Gastrocnemius medialis (tissue), 4 donors: ENCODE measurements at regions of chr1 and their contacts with region 1.

Region 1: GRCh38 chr1:201224666-201225370 is 34.2 kb downstream of the IGFN1 start:
- DNase-seq: no peak
- ATAC-seq: no peak
- H3K4me3 ChIP-seq: no peak overlapping the region
- H3K27ac ChIP-seq: no peak overlapping the region
- H3K4me1 ChIP-seq: peaks cover 0 to 6% of the 10 kb centered on the region in 2 donors
- H3K27me3 ChIP-seq: no peaks in the 10 kb centered on the region
- CTCF ChIP-seq: no peak
- POLR2A ChIP-seq: no peak

Region 2: DNA sequence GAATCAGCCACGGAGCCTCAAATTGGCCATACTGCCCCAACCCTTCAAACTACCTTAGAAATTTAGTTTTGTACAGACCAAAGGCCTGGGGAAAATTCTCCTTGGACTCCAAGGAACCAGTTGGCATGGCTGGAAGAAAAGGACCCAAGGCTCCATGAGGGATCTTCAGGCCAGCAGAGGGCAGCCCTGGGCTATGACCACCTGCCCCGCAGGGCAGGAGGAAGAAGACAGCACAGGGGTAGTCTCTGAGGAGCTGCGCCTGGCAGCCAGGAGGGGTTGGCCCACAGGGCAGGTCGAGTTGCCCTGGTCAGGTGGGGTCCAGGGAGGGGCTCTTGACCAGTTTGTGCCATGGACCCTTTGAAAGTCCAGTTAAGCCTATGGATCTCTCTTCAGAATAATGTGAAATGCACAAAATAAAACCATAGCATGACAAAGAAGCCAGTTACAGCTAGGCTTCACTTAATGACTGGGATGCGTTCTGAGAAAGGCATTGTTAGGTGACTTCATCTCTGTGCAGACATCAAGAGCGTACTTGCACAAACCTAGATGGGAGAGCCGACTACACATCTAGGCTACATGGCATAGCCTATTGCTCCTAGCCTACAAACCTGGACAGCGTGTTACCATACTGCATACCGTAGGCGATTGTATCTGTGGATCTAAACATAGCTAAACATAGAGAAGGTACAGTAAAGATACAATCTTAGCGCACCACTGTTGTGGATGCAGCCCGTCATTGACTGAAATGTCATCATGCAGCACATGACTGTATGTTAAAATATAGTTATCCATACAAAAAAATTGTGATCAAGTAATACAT is 138.7 kb before region 1 on chr1:
- in situ Hi-C with region 1: no loop called
- intact Hi-C with region 1: loop called (anchors 5 kb)
- DNase-seq: peak in 1 of 2 donors; percentile 82
- ATAC-seq: peak; percentile 62 to 87
- H3K4me3 ChIP-seq: no peak overlapping the region
- H3K27ac ChIP-seq: peak overlapping the region; percentile 14 to 98 (median 96)
- H3K4me1 ChIP-seq: peaks cover 15 to 20% of the 10 kb centered on the region in 2 donors
- H3K27me3 ChIP-seq: no peaks in the 10 kb centered on the region
- CTCF ChIP-seq: peak; percentile 82 to 87 (median 85)
- POLR2A ChIP-seq: no peak

Region 3: GRCh38 chr1:201114236-201115131 is 110.3 kb before region 1 on chr1:
- in situ Hi-C with region 1: no loop called
- intact Hi-C with region 1: loop called (anchors 1 kb)
- DNase-seq: peak; percentile 85 to 94
- ATAC-seq: peak; percentile 85 to 92
- H3K4me3 ChIP-seq: peak overlapping the region; percentile 59 to 84 (median 67)
- H3K27ac ChIP-seq: peak overlapping the region; percentile 89 to 98 (median 96)
- H3K4me1 ChIP-seq: peaks cover 38 to 47% of the 10 kb centered on the region in 2 donors
- H3K27me3 ChIP-seq: no peaks in the 10 kb centered on the region
- CTCF ChIP-seq: peak; percentile 86 to 97 (median 93)
- POLR2A ChIP-seq: peak; percentile 12 to 58

Region 4: GRCh38 chr1:201154389-201155165 is 70.2 kb before region 1 on chr1 and contains the start of gene TMEM9:
- in situ Hi-C with region 1: loop called in 1 of 4 experiments (anchors 10 kb)
- intact Hi-C with region 1: loop called (anchors 1 kb)
- DNase-seq: peak; percentile 93 to 96
- ATAC-seq: peak; percentile 94 to 96
- H3K4me3 ChIP-seq: peak within 1 kb of the TSS; percentile 70 to 84 (median 77)
- H3K27ac ChIP-seq: peak within 1 kb of the TSS; percentile 73 to 78 (median 76)
- H3K4me1 ChIP-seq: peaks cover 19 to 33% of the 10 kb centered on the region in 2 donors
- H3K27me3 ChIP-seq: no peaks in the 10 kb centered on the region
- CTCF ChIP-seq: no peak
- POLR2A ChIP-seq: no peak
- total RNA-seq, gene TMEM9: 11.9 to 38.8 (median 13.0) TPM